Naive thymus-derived CD4-positive, alpha-beta T cell (primary cell): ENCODE measurements at regions of chr7 and their contacts with region 1.

Region 1: GRCh38 chr7:17298207-17298839 is at the start of gene AHR:
- DNase-seq: peak; percentile 66 to 91 (median 81)
- ATAC-seq: peak; percentile 91
- H3K4me3 ChIP-seq: peak within 1 kb of the TSS; percentile 70
- H3K4me3 Mint-ChIP-seq: peak within 1 kb of the TSS; percentile 86 to 98 (median 90)
- H3K27ac ChIP-seq: peak within 1 kb of the TSS; percentile 89
- H3K27ac Mint-ChIP-seq: peak within 1 kb of the TSS; percentile 87 to 97 (median 91)
- H3K4me1 ChIP-seq: peaks cover 9 to 19% of the 10 kb centered on the region in 2 donors
- H3K4me1 Mint-ChIP-seq: peaks cover 19 to 40% (median 27%) of the 10 kb centered on the region in 7 donors
- H3K27me3 ChIP-seq: no peaks in the 10 kb centered on the region
- H3K27me3 Mint-ChIP-seq: no peaks in the 10 kb centered on the region
- total RNA-seq, gene AHR: 15.7 to 109 (median 28.2) TPM

Region 2: GRCh38 chr7:16645593-16646471 is 652.5 kb before region 1 on chr7 and contains the starts of genes ANKMY2 and BZW2:
- CTCF ChIA-PET with region 1: no interaction called
- POLR2A ChIA-PET with region 1: no interaction called
- intact Hi-C with region 1: loop called (anchors 1 kb)
- DNase-seq: peak; percentile 88 to 96 (median 93)
- ATAC-seq: peak; percentile 94
- H3K4me3 ChIP-seq: peak within 1 kb of the TSS; percentile 87
- H3K4me3 Mint-ChIP-seq: peak within 1 kb of the TSS; percentile 89 to 100 (median 97)
- H3K27ac ChIP-seq: peak within 1 kb of the TSS; percentile 76
- H3K27ac Mint-ChIP-seq: peak within 1 kb of the TSS; percentile 91 to 99 (median 97)
- H3K4me1 ChIP-seq: peaks cover 14 to 25% of the 10 kb centered on the region in 2 donors
- H3K4me1 Mint-ChIP-seq: peaks cover 46 to 83% (median 65%) of the 10 kb centered on the region in 7 donors
- H3K27me3 ChIP-seq: no peaks in the 10 kb centered on the region
- H3K27me3 Mint-ChIP-seq: no peaks in the 10 kb centered on the region
- total RNA-seq, gene ANKMY2: 6.3 to 16.4 (median 8.7) TPM
- total RNA-seq, gene BZW2: 24.6 to 52.1 (median 28.0) TPM

Region 3: GRCh38 chr7:16982640-16983350 is 315.5 kb before region 1 on chr7:
- CTCF ChIA-PET with region 1: interaction called, 17 read pairs
- POLR2A ChIA-PET with region 1: no interaction called
- intact Hi-C with region 1: loop called (anchors 1 kb)
- DNase-seq: peak in 6 of 9 donors; percentile 4 to 55 (median 34)
- ATAC-seq: peak; percentile 74
- H3K4me3 ChIP-seq: no peak overlapping the region
- H3K4me3 Mint-ChIP-seq: no peak overlapping the region
- H3K27ac ChIP-seq: no peak overlapping the region
- H3K27ac Mint-ChIP-seq: peak overlapping the region in 3 of 9 donors; percentile 1 to 51 (median 26)
- H3K4me1 ChIP-seq: no peaks in the 10 kb centered on the region
- H3K4me1 Mint-ChIP-seq: peaks cover 0 to 7% (median 4%) of the 10 kb centered on the region in 7 donors
- H3K27me3 ChIP-seq: peaks cover 0 to 5% of the 10 kb centered on the region in 2 donors
- H3K27me3 Mint-ChIP-seq: peaks cover 14 to 60% (median 25%) of the 10 kb centered on the region in 5 donors

Region 4: GRCh38 chr7:17139081-17139480 is 159.2 kb before region 1 on chr7:
- CTCF ChIA-PET with region 1: interaction called, 4 read pairs
- POLR2A ChIA-PET with region 1: interaction called, 11 read pairs
- intact Hi-C with region 1: loop called (anchors 1 kb)
- DNase-seq: peak in 5 of 9 donors; percentile 1 to 39 (median 23)
- ATAC-seq: peak; percentile 47
- H3K4me3 ChIP-seq: peak overlapping the region; percentile 4
- H3K4me3 Mint-ChIP-seq: peak overlapping the region; percentile 10 to 77 (median 74)
- H3K27ac ChIP-seq: peak overlapping the region; percentile 67
- H3K27ac Mint-ChIP-seq: peak overlapping the region; percentile 86 to 96 (median 89)
- H3K4me1 ChIP-seq: peaks cover 41 to 42% of the 10 kb centered on the region in 2 donors
- H3K4me1 Mint-ChIP-seq: peaks cover 34 to 76% (median 48%) of the 10 kb centered on the region in 7 donors
- H3K27me3 ChIP-seq: no peaks in the 10 kb centered on the region
- H3K27me3 Mint-ChIP-seq: no peaks in the 10 kb centered on the region

Region 5: DNA sequence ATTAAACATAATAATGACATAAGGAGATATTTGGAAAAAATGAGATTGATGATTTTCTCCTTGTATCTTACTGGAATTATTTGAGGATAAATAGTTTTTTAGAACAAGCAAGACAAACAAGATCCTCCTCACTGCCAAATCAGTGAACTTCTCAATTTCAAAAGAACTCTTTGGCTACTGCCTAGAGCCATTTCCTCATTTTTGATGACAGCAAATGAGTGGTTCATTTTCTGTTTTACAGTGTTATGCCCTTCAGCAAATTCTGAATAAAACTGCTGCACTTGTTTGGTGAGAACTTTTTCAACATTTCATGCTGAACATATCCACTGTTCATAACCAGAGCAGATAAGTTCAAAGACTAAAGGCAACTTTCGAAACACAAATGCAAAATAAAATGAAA is 42.4 kb before region 1 on chr7:
- CTCF ChIA-PET with region 1: no interaction called
- POLR2A ChIA-PET with region 1: no interaction called
- intact Hi-C with region 1: loop called in 1 of 2 experiments (anchors 5 kb)
- DNase-seq: no peak
- ATAC-seq: no peak
- H3K4me3 ChIP-seq: no peak overlapping the region
- H3K4me3 Mint-ChIP-seq: no peak overlapping the region
- H3K27ac ChIP-seq: no peak overlapping the region
- H3K27ac Mint-ChIP-seq: no peak overlapping the region
- H3K4me1 ChIP-seq: no peaks in the 10 kb centered on the region
- H3K4me1 Mint-ChIP-seq: peaks cover 0 to 3% (median 0%) of the 10 kb centered on the region in 7 donors
- H3K27me3 ChIP-seq: no peaks in the 10 kb centered on the region
- H3K27me3 Mint-ChIP-seq: no peaks in the 10 kb centered on the region

Region 6: DNA sequence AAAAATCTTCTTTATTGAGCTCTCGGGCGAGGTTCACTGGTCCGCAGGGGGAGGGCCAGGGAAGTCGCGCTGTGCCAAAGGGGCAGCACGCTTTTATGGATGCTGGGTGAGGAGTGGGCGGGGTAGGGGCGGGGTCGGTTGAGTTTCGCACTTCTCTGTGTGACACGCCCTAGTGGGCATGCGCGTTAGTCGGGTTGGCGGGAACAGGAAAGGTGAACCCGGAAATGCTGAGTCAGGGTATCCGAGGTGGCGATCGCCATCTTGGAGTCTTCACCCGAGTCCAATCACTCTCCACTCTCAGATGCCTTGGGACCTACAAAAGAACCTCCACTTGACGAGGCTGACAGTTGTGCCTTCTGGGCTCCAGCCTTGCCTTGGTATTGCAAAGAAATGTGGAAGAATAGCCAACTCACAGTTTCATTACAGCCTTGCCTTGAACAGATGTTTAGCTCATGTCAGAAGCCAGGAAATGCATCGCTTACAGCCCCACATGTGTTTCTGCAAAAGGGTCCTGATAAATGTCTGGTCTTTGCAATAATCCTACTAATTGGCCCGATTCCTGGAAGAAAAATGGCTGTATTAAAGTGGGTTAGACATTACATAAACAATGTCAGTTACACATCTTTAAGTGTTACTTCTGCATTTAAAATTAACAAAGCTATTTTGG is 64.2 kb after region 1 on chr7:
- CTCF ChIA-PET with region 1: no interaction called
- POLR2A ChIA-PET with region 1: no interaction called
- intact Hi-C with region 1: no loop called
- DNase-seq: no peak
- ATAC-seq: no peak
- H3K4me3 ChIP-seq: no peak overlapping the region
- H3K4me3 Mint-ChIP-seq: no peak overlapping the region
- H3K27ac ChIP-seq: no peak overlapping the region
- H3K27ac Mint-ChIP-seq: no peak overlapping the region
- H3K4me1 ChIP-seq: no peaks in the 10 kb centered on the region
- H3K4me1 Mint-ChIP-seq: peaks cover 0 to 8% (median 0%) of the 10 kb centered on the region in 7 donors
- H3K27me3 ChIP-seq: no peaks in the 10 kb centered on the region
- H3K27me3 Mint-ChIP-seq: peaks cover 0 to 12% (median 0%) of the 10 kb centered on the region in 5 donors